Activated naive CD8-positive, alpha-beta T cell treated with anti-CD3 and anti-CD28 coated beads, Interleukin-2, amount 10 ng/mL, durations not matched to agents 7 days and 5 days (primary cell): ENCODE measurements at regions of chr17 and their contacts with region 1.

Region 1: DNA sequence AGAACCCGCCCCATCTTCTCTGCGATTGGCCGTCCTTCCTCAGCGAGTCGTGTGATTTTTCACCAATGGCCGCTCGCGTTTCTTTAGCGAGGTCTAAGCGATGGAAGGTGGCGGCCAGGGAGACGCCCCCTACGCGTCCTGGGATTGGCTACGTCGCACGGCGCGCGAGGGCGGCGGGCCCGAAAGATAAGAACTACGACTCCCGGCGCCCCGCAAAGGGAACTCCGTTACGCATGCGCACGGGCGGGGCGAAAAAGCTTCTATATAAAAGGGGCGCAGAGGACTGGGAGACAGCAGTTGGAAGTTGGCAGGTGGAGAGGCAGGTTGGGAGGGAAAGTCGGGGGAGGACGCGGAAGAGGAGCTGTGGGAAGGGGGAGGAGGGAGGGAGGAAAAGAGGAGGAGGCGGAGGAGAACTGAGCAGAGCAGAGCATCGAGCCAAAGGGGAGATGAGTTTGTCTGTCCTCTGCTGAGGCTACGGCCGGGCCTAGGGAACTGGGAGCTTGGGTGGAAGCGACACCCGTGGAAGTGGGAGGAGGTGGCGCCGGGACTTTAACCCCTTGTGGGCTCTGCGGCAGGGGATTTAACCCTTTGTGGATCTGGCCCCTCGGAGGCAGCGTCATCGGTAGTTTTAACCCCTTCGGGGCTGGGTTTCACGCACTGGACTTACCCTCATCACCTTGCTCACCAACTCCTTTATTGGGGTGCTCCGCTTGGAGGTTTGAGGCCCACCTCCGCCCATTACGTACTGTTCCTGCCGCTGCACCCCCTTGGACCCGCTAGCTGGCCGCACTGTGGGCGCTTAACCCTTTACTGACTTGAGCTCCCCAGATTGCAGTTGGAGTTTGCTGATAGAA is at the start of gene HEXIM1:
- DNase-seq: peak; percentile 98
- ATAC-seq: peak; percentile 77
- H3K4me3 Mint-ChIP-seq: peak within 1 kb of the TSS; percentile 99
- H3K27ac Mint-ChIP-seq: peak within 1 kb of the TSS; percentile 100
- H3K4me1 Mint-ChIP-seq: peaks cover 29% of the 10 kb centered on the region
- H3K27me3 Mint-ChIP-seq: no peaks in the 10 kb centered on the region
- total RNA-seq, gene HEXIM1: 33.6 to 33.7 TPM

Region 2: GRCh38 chr17:44961921-44962350 is 186.5 kb before region 1 on chr17:
- POLR2A ChIA-PET with region 1: no interaction called
- DNase-seq: no peak
- ATAC-seq: no peak
- H3K4me3 Mint-ChIP-seq: no peak overlapping the region
- H3K27ac Mint-ChIP-seq: no peak overlapping the region
- H3K4me1 Mint-ChIP-seq: peaks cover 5% of the 10 kb centered on the region
- H3K27me3 Mint-ChIP-seq: peaks cover 78% of the 10 kb centered on the region

Region 3: DNA sequence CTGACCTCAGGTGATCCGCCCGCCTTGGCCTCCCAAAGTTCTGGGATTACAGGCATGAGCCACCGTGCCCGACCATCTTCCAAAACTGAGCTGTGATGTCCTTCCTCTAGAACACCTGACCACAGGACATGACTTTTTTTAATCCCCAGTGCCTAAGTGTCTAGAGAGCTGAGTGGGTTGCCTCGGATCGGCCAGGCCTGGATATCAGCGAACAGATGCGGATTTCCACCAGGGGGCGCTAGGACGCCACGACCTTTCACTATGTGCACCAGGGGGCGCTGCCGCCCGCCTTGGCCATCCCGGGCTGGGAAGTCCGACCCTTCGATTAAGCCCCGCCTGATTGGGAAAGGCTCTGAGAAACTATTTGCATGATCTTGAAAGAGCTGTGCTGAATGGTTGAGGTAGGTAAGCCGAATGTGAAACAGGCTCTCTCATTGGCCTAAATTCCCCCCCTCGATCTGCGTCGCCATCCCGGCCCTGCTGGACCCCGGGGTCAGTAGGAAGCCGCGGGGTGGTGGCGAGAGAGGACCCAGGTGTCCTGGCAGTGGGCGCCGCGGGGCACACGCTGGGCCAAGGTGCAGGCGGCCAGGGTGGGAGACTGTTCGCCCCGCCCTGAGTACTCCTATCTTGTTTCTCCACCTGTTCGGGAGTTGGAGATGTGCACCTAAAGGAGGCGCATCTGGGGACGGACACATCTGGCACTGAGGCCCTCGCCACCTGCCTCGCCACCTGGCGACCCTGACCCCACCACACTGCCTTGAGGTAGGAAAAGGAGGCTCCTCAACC is 13.0 kb before region 1 on chr17 and contains the start of gene ACBD4:
- POLR2A ChIA-PET with region 1: interaction called, 70 read pairs
- DNase-seq: peak; percentile 99
- ATAC-seq: peak; percentile 91
- H3K4me3 Mint-ChIP-seq: peak within 1 kb of the TSS; percentile 94
- H3K27ac Mint-ChIP-seq: peak within 1 kb of the TSS; percentile 80
- H3K4me1 Mint-ChIP-seq: peaks cover 8% of the 10 kb centered on the region
- H3K27me3 Mint-ChIP-seq: peaks cover 11% of the 10 kb centered on the region
- total RNA-seq, gene ACBD4: 24.5 to 25.0 TPM

Region 4: DNA sequence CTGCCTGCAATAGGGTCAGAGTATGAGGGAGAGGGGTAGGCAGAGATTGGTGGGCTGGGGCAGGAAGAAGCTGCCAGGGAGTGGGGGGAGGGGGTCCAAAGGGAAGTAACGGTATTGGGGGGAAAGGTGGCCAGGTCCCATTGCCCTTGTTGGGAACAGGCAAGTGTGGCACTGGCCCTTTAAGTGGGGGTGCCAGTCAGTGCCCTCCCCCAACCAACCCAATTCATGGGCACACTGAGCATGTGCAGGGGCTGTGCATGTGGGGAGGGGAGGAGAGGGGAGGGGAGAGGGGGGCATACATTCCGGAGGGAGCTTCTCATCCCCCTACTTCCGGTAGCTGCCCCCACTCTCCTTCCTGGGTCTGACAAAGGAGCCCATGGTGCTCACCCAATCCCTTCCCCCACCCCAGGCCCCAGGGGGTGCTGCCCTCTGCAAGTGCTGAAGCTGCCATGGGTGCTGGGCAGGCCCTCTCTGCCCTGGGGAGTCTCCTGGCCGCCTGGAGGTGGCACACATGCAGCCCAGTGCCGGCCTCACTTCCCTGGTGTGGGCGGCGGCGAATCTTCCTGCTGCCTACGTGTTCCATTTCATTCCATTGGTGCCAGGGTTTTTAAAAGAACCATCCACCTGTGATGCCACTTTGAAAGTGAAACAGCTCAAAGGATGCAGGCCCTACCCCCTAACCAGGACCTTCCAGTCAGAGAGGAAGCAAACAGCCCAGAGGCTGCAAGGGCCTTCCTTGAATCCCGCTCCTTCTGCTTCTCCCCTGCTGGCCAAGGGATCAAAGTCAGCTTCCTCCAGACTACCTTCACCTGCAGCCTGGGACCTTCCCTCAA is 24.3 kb after region 1 on chr17:
- POLR2A ChIA-PET with region 1: interaction called, 74 read pairs
- DNase-seq: peak; percentile 72
- ATAC-seq: peak; percentile 71
- H3K4me3 Mint-ChIP-seq: peak overlapping the region; percentile 86
- H3K27ac Mint-ChIP-seq: peak overlapping the region; percentile 96
- H3K4me1 Mint-ChIP-seq: peaks cover 7% of the 10 kb centered on the region
- H3K27me3 Mint-ChIP-seq: no peaks in the 10 kb centered on the region

Region 5: DNA sequence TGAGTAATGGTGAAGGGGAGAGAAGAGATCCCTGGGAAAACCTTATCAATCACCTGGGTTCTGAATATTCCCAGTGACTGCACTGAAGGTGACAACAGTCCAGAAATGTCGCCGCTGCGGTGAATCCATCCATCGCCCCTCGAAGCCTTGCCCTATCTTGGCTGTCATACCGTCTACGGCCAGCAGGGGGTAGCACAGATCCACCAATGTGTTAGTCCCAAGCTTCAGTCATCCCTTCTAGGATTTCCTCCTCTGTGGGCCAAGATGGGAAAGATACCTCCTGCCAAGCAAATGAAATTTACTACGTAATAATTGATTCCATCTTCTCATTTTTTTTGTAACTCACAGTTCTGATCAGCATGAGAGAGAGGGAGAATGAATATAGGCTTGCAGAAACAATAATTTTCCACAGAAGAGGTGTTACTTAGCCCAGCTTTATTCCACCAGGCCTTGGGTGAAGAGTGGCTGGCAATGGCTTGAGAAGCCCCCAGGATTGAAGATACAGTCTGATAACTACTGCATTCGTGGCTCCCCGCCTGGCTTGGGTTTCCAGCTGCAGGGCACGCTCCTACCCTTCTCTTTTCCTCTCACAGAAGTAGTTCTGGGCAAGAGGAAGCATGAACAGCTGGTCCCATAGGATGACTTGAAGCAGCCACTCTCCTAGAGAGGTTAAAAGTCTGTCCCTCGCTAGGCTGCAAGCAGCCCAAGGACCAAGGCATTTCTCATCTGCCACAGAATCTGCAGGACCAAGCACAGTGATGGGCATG is 70.7 kb after region 1 on chr17:
- POLR2A ChIA-PET with region 1: interaction called, 39 read pairs
- DNase-seq: peak; percentile 88
- ATAC-seq: no peak
- H3K4me3 Mint-ChIP-seq: peak overlapping the region; percentile 95
- H3K27ac Mint-ChIP-seq: peak overlapping the region; percentile 62
- H3K4me1 Mint-ChIP-seq: peaks cover 33% of the 10 kb centered on the region
- H3K27me3 Mint-ChIP-seq: no peaks in the 10 kb centered on the region

Region 6: DNA sequence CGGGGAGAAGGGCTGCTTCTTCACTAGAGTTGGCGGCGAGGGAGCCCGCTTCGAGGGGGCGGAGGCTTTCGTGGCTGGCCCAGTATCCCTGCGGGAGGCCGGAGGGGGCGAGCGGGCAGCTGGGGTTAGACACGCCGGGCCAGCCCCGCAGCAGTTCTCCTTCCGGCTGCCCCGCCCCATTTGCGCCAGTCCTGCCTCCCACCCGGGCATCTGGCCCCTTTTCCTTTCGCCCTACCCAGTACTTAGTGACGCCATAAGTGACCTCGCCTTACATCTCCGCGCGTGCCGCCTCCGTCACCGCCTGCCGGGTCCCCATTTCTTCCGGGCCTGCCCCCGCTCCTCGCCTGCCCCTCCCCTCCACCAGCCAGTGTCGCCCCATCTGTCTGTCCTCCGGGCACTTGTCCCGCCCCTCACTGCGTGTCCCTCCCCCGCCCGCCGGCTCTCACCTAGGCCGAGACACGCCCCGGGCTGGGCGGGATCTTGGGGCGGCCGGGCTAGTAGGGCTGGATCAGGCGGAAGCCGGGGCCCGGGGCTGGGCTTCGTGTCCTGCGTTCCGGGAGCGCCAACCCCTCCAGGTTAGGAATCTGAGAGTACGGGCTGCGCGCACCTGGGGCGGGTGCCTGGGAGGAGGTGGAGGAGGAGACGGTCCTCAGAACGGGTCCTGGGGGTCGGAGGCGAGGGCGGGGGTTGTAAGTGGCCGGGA is 99.2 kb after region 1 on chr17:
- POLR2A ChIA-PET with region 1: interaction called, 28 read pairs
- DNase-seq: peak; percentile 98
- ATAC-seq: peak; percentile 81
- H3K4me3 Mint-ChIP-seq: peak overlapping the region; percentile 92
- H3K27ac Mint-ChIP-seq: peak overlapping the region; percentile 97
- H3K4me1 Mint-ChIP-seq: peaks cover 47% of the 10 kb centered on the region
- H3K27me3 Mint-ChIP-seq: no peaks in the 10 kb centered on the region

Region 7: GRCh38 chr17:45317112-45317928 is 168.9 kb after region 1 on chr17:
- POLR2A ChIA-PET with region 1: interaction called, 13 read pairs
- DNase-seq: peak; percentile 99
- ATAC-seq: peak; percentile 87
- H3K4me3 Mint-ChIP-seq: peak overlapping the region; percentile 88
- H3K27ac Mint-ChIP-seq: peak overlapping the region; percentile 84
- H3K4me1 Mint-ChIP-seq: peaks cover 62% of the 10 kb centered on the region
- H3K27me3 Mint-ChIP-seq: no peaks in the 10 kb centered on the region